Activated CD4-positive, alpha-beta T cell treated with anti-CD3 and anti-CD28 coated beads for 36 hours (primary cell): ENCODE measurements at regions of chr5 and their contacts with region 1.

Region 1: GRCh38 chr5:119578937-119579336 is 50.4 kb upstream of the FAM170A start:
- DNase-seq: peak; percentile 6
- ATAC-seq: peak; percentile 58
- H3K4me3 Mint-ChIP-seq: no peak overlapping the region
- H3K27ac Mint-ChIP-seq: no peak overlapping the region
- H3K4me1 Mint-ChIP-seq: no peaks in the 10 kb centered on the region
- H3K27me3 Mint-ChIP-seq: no peaks in the 10 kb centered on the region

Region 2: DNA sequence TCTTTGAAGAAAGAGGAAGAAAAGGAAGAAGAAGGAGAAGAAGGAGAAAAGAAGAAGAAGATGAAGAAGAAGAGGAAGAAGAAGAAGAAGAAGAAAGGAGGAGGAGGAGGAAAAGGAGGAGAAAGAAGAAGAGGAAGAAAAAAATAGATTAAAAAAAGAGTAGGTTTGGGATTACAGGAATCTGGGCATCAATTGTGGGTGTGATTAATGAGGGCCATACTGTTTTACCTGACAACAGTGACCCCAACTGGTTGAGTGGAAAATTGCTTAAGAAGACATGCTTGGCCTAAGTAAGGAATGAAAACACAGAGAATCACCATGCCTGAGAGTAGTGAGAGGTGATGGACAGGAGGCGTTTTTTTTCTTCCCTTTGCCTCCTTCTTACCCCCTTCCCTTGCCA is 165.0 kb after region 1 on chr5:
- CTCF ChIA-PET with region 1: interaction called, 3 read pairs
- POLR2A ChIA-PET with region 1: no interaction called
- intact Hi-C with region 1: loop called (anchors 1 to 10 kb)
- DNase-seq: peak; percentile 10
- ATAC-seq: peak; percentile 51
- H3K4me3 Mint-ChIP-seq: no peak overlapping the region
- H3K27ac Mint-ChIP-seq: no peak overlapping the region
- H3K4me1 Mint-ChIP-seq: no peaks in the 10 kb centered on the region
- H3K27me3 Mint-ChIP-seq: peaks cover 2% of the 10 kb centered on the region